GM23248 (cell line): ENCODE measurements at regions of chr21 and their contacts with region 1.

Region 1: DNA sequence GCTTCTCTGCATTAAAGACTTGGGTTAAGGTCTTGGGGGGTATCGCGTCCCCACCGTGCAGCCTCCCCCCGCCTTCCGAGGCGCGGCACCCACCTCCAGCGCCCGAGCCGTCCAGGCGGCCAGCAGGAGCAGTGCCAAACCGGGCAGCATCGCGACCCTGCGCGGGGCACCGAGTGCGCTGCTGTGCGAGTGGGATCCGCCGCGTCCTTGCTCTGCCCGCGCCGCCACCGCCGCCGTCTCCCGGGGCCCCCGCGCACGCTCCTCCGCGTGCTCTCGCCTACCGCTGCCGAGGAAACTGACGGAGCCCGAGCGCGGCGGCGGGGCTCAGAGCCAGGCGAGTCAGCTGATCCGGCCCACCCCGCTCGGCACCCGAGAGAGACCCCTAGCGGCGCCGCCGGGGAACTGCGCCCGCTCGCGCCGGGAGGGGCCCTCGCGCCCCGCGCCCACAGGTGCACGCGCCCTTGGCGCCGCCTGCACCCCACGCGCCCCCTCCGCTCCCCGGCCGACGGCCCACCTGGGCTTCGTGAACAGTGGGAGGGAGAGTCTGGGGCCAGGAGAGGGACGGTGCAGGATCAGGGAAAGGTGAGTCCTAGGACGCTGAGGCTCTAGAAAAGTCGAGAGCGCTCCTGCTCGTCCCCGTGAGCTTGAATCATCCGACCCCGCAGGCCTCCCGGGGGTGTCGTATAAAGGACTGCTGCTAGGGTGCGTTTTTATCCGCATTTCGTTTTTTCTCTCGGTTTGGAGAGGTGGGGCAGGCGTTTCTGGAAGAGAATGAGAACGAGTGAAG is at the start of gene APP:
- DNase-seq: peak; percentile 92
- H3K4me3 ChIP-seq: peak within 1 kb of the TSS; percentile 93
- H3K27ac ChIP-seq: peak within 1 kb of the TSS; percentile 64
- H3K4me1 ChIP-seq: peaks cover 23% of the 10 kb centered on the region
- H3K27me3 ChIP-seq: no peaks in the 10 kb centered on the region
- total RNA-seq, gene APP: 276 and 292 TPM in 2 replicates

Region 2: DNA sequence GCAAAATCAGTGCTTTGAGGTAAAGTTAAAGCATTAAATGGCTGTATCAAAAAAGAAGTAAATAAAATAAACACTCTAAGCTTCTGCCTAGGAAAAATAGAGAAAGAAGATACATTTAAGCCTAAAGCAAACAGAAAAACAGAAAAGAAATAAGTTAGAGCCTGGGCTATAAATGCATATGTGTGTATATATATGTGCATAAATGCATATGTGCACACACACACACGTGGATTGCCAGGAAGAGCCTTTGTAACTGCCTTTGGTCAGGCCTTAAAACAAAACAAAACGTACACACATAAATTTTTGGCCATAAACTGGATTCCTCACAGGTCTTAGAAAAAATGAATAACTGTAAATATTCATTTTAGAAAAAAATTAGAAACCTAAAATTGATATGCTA is 1489.2 kb before region 1 on chr21:
- in situ Hi-C with region 1: no loop called
- DNase-seq: no peak
- H3K4me3 ChIP-seq: no peak overlapping the region
- H3K27ac ChIP-seq: no peak overlapping the region
- H3K4me1 ChIP-seq: no peaks in the 10 kb centered on the region
- H3K27me3 ChIP-seq: no peaks in the 10 kb centered on the region

Region 3: DNA sequence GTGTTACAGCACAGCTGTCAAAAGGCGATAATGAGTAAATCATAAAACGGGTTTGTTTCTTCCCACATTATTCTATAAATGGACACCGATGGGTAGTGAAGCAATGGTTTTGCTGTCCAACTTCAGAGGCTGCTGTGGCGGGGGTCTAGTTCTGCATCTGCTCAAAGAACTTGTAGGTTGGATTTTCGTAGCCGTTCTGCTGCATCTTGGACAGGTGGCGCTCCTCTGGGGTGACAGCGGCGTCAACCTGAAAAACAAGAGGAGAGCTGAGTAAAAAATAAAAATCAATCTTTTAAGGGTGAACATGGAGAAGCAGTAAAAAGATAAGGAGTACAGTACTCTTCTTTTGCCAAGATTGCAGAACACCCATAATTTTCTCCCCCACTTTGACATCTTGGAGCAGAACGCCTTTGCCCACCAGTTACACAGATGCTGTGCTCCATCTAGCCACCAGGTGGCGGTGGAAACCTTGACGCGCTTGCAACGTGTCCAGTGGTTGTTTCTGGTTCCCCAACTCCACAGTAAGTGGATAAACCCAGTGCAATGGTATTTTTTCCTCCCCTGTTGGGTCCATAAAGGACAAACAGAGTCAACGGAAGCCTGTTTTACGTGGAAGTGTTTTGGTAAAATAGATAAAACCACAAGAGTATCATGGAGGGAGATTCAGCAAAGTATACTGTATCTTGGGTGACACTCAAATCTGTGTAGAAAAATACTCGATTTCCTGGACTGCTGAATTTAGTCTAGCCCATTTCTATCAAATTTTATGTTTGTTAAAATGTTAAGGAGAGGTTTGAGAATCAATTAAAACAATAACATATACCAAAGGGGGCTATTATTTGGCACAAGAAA is 288.9 kb before region 1 on chr21:
- in situ Hi-C with region 1: loop called (anchors 25 kb)
- DNase-seq: peak; percentile 67
- H3K4me3 ChIP-seq: no peak overlapping the region
- H3K27ac ChIP-seq: no peak overlapping the region
- H3K4me1 ChIP-seq: no peaks in the 10 kb centered on the region
- H3K27me3 ChIP-seq: no peaks in the 10 kb centered on the region

Region 4: DNA sequence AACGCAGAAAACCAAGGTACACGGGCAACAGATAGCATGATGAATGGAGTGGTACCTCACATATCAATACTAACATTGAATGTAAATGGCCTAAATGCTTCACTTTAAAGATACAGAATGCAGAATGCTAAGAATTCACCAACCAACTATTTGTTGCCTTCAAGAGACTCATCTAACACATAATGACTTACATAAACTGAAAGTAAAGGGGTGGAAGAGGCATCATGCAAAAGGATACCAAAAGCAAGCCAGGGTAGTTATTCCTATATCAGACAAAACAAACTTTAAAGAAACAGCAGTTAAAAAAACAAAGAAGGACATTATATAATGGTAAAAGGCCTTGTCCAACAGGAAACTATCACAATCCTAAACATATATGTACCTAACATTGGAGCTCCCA is 137.0 kb after region 1 on chr21:
- in situ Hi-C with region 1: no loop called
- DNase-seq: no peak
- H3K4me3 ChIP-seq: no peak overlapping the region
- H3K27ac ChIP-seq: no peak overlapping the region
- H3K4me1 ChIP-seq: no peaks in the 10 kb centered on the region
- H3K27me3 ChIP-seq: no peaks in the 10 kb centered on the region

Region 5: GRCh38 chr21:27734146-27734545 is 1563.5 kb after region 1 on chr21:
- in situ Hi-C with region 1: no loop called
- DNase-seq: peak; percentile 69
- H3K4me3 ChIP-seq: no peak overlapping the region
- H3K27ac ChIP-seq: peak overlapping the region; percentile 21; the same call in 1 of the 2 replicates
- H3K4me1 ChIP-seq: peaks cover 8% of the 10 kb centered on the region; the same call in 1 of the 2 replicates
- H3K27me3 ChIP-seq: no peaks in the 10 kb centered on the region